ENCODE measurements at regions of chr1 and their contacts with region 1.

Region 1: GRCh38 chr1:67897270-67897949 is 64.1 kb upstream of the GNG12 start:
- DNase-seq: peak; percentile 97
- H3K4me3 ChIP-seq: no peak overlapping the region
- H3K27ac ChIP-seq: peak overlapping the region; percentile 91
- H3K4me1 ChIP-seq: peaks cover 26% of the 10 kb centered on the region
- H3K27me3 ChIP-seq: no peaks in the 10 kb centered on the region
- CTCF ChIP-seq: no peak
- POLR2A ChIP-seq: no peak

Region 2: GRCh38 chr1:67908250-67908936 is 11.0 kb after region 1 on chr1:
- CTCF ChIA-PET with region 1: interaction called, 17 read pairs
- POLR2A ChIA-PET with region 1: interaction called, 3 read pairs
- dilution Hi-C with region 1: no loop called
- intact Hi-C with region 1: no loop called
- DNase-seq: peak; percentile 65
- H3K4me3 ChIP-seq: no peak overlapping the region
- H3K27ac ChIP-seq: no peak overlapping the region
- H3K4me1 ChIP-seq: peaks cover 11% of the 10 kb centered on the region
- H3K27me3 ChIP-seq: no peaks in the 10 kb centered on the region
- CTCF ChIP-seq: no peak
- POLR2A ChIP-seq: no peak

Region 3: DNA sequence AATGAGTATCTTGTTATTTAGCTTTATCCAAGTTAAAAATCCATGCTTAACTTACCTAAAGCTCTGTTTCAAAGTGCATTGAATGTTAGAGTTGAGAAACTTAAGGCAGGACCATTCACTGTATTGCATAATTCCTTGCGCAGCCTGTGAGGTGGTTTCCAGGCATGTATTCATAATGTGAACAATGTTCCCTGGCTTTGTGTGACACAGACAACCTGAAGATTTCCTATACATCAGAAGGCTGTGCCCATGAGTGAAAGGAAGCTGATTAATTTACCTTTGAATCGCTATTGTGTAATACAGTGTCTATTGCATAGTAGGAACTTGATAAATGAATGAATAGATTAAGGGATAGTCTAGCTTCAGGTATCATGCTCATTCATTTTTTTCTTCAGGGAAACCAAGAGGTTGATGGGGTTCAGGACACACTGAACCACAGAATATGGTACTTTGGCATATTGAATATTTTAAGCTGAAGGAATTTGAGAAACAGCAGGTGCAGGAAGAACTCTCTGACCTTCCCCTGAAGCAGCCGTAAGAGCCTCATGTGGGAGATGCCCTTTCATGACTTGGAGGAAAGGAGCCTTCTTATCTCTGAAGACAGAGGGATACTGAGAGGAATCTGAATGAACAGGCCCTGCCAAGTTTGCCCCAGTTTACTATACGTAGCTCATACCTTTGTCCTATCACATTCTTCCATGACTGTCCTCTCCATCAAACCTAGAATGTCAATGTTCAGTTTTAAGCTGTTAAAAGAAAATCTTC is 24.5 kb after region 1 on chr1:
- CTCF ChIA-PET with region 1: interaction called, 12 read pairs
- POLR2A ChIA-PET with region 1: interaction called, 5 read pairs
- dilution Hi-C with region 1: no loop called
- intact Hi-C with region 1: no loop called
- DNase-seq: peak; percentile 96
- H3K4me3 ChIP-seq: no peak overlapping the region
- H3K27ac ChIP-seq: no peak overlapping the region
- H3K4me1 ChIP-seq: no peaks in the 10 kb centered on the region
- H3K27me3 ChIP-seq: no peaks in the 10 kb centered on the region
- CTCF ChIP-seq: no peak
- POLR2A ChIP-seq: peak; percentile 46

Region 4: GRCh38 chr1:68051475-68051874 is 154.1 kb after region 1 on chr1:
- CTCF ChIA-PET with region 1: interaction called, 10 read pairs
- POLR2A ChIA-PET with region 1: no interaction called
- dilution Hi-C with region 1: no loop called
- intact Hi-C with region 1: loop called (anchors 2 kb)
- DNase-seq: peak; percentile 77
- H3K4me3 ChIP-seq: peak overlapping the region in 2 of 3 experiments; percentile 42 to 49
- H3K27ac ChIP-seq: no peak overlapping the region
- H3K4me1 ChIP-seq: no peaks in the 10 kb centered on the region
- H3K27me3 ChIP-seq: no peaks in the 10 kb centered on the region
- CTCF ChIP-seq: peak; percentile 39 to 59
- POLR2A ChIP-seq: peak; percentile 20

Region 5: DNA sequence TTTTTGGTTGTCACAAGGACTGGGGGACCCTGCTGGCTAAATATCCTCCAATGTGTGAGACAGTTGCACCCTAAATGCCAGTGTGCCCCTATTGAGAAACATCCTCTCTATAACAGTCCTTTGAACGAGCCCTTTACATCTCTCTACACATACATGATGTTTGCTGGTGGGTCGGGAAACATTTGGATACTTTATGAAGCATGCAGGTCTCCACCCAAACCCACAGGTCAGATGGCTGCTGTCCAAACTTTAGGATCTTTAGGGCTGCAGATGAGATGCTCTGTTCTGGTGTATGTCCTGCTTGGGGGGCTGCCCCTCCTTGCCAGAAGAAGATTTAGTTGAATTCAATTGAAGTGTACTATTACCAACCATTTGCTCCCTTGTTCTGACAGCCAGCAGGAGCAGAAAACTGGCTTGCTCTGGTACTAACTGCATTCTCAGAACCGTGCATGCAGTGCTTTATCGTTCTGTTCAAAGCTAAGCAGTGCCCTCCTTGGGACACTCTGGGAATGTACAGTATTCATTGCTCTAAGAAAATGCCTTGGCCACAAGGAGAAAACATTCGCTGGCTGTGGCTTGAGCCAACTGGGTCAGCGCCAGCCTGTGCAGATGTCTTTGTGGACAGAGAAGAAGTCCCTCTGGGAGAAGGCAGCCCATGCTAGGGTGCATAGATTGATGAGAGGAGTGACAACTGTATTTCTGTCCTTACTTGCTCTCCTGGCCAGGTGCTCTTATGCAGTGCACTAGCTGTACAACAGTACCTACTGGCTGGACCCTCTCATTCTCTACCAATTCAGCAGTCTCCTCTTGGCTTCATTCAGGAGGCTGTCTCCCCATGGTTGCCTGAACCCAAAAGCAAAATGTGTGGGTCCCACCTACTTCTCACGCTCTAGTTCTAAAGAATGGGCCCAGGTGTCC is 214.4 kb after region 1 on chr1:
- CTCF ChIA-PET with region 1: no interaction called
- POLR2A ChIA-PET with region 1: no interaction called
- dilution Hi-C with region 1: no loop called
- intact Hi-C with region 1: loop called (anchors 2 kb)
- DNase-seq: peak; percentile 88
- H3K4me3 ChIP-seq: no peak overlapping the region
- H3K27ac ChIP-seq: no peak overlapping the region
- H3K4me1 ChIP-seq: peaks cover 8% of the 10 kb centered on the region
- H3K27me3 ChIP-seq: no peaks in the 10 kb centered on the region
- CTCF ChIP-seq: peak; percentile 68
- POLR2A ChIP-seq: no peak

Measured in endothelial cell of umbilical vein (primary cell).